Naive thymus-derived CD4-positive, alpha-beta T cell (primary cell): ENCODE measurements at regions of chr3 and their contacts with region 1.

Region 1: DNA sequence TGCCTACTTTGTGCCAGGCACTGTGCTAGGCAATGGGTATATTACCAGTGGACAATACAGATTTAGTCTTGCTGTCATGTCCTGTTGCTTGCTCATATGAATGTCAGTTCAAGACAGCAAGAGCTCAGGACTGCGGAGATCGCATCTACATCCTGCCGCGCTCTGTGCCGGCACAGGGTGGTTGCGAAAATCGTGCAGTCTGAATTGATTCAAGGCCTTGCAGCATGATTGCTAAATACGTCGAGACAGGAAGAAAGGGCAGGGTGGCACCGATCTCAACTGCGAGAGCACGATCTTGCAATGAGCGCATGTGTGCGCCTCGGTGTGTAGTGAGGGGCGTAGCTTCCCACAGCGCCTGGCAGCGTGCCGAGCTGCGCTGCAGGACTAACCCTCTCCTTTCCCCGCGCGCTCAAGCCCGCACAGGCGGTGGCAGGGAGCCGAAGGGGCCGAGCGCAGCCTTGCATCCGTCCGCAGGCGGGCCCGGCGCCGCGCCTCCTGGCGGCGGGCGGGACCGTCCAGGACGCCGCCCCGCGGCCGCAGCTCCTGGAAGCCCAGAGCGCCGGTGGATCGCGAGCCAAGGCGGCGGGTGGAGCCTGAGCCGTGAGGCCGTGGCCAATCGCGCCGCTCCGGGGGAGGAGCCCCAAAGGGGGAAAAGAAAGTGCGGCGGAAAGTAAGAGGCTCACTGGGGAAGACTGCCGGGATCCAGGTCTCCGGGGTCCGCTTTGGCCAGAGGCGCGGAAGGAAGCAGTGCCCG is at the start of gene IL1RAP:
- DNase-seq: peak; percentile 80 to 93 (median 90)
- ATAC-seq: peak; percentile 93
- H3K4me3 ChIP-seq: peak within 1 kb of the TSS; percentile 93
- H3K4me3 Mint-ChIP-seq: peak within 1 kb of the TSS; percentile 85 to 98 (median 92)
- H3K27ac ChIP-seq: peak within 1 kb of the TSS; percentile 77
- H3K27ac Mint-ChIP-seq: peak within 1 kb of the TSS in 7 of 9 donors; percentile 86 to 98 (median 96)
- H3K4me1 ChIP-seq: peaks cover 11 to 15% of the 10 kb centered on the region in 2 donors
- H3K4me1 Mint-ChIP-seq: peaks cover 18 to 37% (median 26%) of the 10 kb centered on the region in 7 donors
- H3K27me3 ChIP-seq: no peaks in the 10 kb centered on the region
- H3K27me3 Mint-ChIP-seq: peaks cover 0 to 4% (median 0%) of the 10 kb centered on the region in 5 donors
- total RNA-seq, gene IL1RAP: 12.0 to 29.0 (median 14.8) TPM

Region 2: DNA sequence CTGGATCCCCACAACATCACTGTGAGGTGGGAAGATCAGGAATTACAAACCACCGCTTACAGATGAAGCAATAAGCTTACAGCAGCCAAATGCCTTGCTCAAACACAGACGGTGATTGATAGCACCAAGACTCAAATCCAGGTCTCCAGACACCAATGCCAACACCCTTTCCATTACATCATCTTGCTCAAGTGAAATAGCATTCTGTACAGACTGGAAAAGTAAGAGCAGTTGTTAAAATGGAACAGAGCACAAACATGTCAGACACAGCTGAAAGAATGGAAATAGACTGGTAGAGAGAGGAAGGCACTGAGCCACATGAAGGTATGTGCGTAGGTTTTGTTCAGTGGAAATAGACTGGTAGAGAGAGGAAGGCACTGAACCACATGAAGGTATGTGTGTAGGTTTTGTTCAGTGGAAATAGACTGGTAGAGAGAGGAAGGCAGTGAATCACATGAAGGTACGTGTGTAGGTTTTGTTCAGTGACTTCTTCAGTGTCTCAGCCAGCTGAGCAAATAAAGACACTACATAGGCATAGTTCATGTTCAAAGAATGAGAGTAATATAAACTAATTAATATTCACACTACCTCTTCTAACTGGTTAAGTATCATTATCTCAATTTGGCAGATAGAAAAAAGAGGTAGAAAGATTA is 206.9 kb before region 1 on chr3:
- CTCF ChIA-PET with region 1: no interaction called
- POLR2A ChIA-PET with region 1: no interaction called
- intact Hi-C with region 1: loop called in 1 of 2 experiments (anchors 2 kb)
- DNase-seq: peak in 7 of 9 donors; percentile 61 to 88 (median 78)
- ATAC-seq: peak; percentile 97
- H3K4me3 ChIP-seq: no peak overlapping the region
- H3K4me3 Mint-ChIP-seq: peak overlapping the region in 9 of 10 donors; percentile 8 to 53 (median 25)
- H3K27ac ChIP-seq: no peak overlapping the region
- H3K27ac Mint-ChIP-seq: peak overlapping the region in 8 of 9 donors; percentile 38 to 90 (median 80)
- H3K4me1 ChIP-seq: peaks cover 0 to 27% of the 10 kb centered on the region in 2 donors
- H3K4me1 Mint-ChIP-seq: peaks cover 13 to 39% (median 27%) of the 10 kb centered on the region in 7 donors
- H3K27me3 ChIP-seq: no peaks in the 10 kb centered on the region
- H3K27me3 Mint-ChIP-seq: peaks cover 0 to 6% (median 0%) of the 10 kb centered on the region in 5 donors

Region 3: GRCh38 chr3:190424478-190425439 is 88.8 kb before region 1 on chr3:
- CTCF ChIA-PET with region 1: interaction called, 4 read pairs
- POLR2A ChIA-PET with region 1: interaction called, 3 read pairs
- intact Hi-C with region 1: loop called (anchors 1 to 5 kb)
- DNase-seq: peak in 7 of 9 donors; percentile 2 to 47 (median 23)
- ATAC-seq: peak; percentile 56
- H3K4me3 ChIP-seq: no peak overlapping the region
- H3K4me3 Mint-ChIP-seq: peak overlapping the region in 8 of 10 donors; percentile 15 to 72 (median 31)
- H3K27ac ChIP-seq: no peak overlapping the region
- H3K27ac Mint-ChIP-seq: peak overlapping the region in 5 of 9 donors; percentile 3 to 59 (median 28)
- H3K4me1 ChIP-seq: no peaks in the 10 kb centered on the region
- H3K4me1 Mint-ChIP-seq: peaks cover 0 to 8% (median 3%) of the 10 kb centered on the region in 7 donors
- H3K27me3 ChIP-seq: no peaks in the 10 kb centered on the region
- H3K27me3 Mint-ChIP-seq: peaks cover 0 to 7% (median 0%) of the 10 kb centered on the region in 5 donors

Region 4: GRCh38 chr3:190585805-190586630 is 72.4 kb after region 1 on chr3:
- CTCF ChIA-PET with region 1: no interaction called
- POLR2A ChIA-PET with region 1: interaction called, 4 read pairs
- intact Hi-C with region 1: loop called in 1 of 2 experiments (anchors 1 kb)
- DNase-seq: peak in 1 of 9 donors; percentile 56
- ATAC-seq: peak; percentile 88
- H3K4me3 ChIP-seq: no peak overlapping the region
- H3K4me3 Mint-ChIP-seq: peak overlapping the region in 4 of 10 donors; percentile 14 to 43 (median 26)
- H3K27ac ChIP-seq: no peak overlapping the region
- H3K27ac Mint-ChIP-seq: peak overlapping the region in 2 of 9 donors; percentile 6 to 84
- H3K4me1 ChIP-seq: peaks cover 4% of the 10 kb centered on the region in 2 donors
- H3K4me1 Mint-ChIP-seq: peaks cover 8 to 50% (median 21%) of the 10 kb centered on the region in 7 donors
- H3K27me3 ChIP-seq: no peaks in the 10 kb centered on the region
- H3K27me3 Mint-ChIP-seq: no peaks in the 10 kb centered on the region

Region 5: GRCh38 chr3:190696777-190697501 is 183.4 kb after region 1 on chr3:
- CTCF ChIA-PET with region 1: no interaction called
- POLR2A ChIA-PET with region 1: no interaction called
- intact Hi-C with region 1: loop called in 1 of 2 experiments (anchors 1 kb)
- DNase-seq: no peak
- ATAC-seq: no peak
- H3K4me3 ChIP-seq: no peak overlapping the region
- H3K4me3 Mint-ChIP-seq: no peak overlapping the region
- H3K27ac ChIP-seq: no peak overlapping the region
- H3K27ac Mint-ChIP-seq: no peak overlapping the region
- H3K4me1 ChIP-seq: no peaks in the 10 kb centered on the region
- H3K4me1 Mint-ChIP-seq: peaks cover 0 to 8% (median 0%) of the 10 kb centered on the region in 7 donors
- H3K27me3 ChIP-seq: no peaks in the 10 kb centered on the region
- H3K27me3 Mint-ChIP-seq: peaks cover 14 to 46% (median 22%) of the 10 kb centered on the region in 5 donors